Activated CD4-positive, alpha-beta T cell treated with anti-CD3 and anti-CD28 coated beads, Interleukin-2, amount 10 ng/mL, durations not matched to agents 7 days and 5 days (primary cell): ENCODE measurements at regions of chr13 and their contacts with region 1.

Region 1: DNA sequence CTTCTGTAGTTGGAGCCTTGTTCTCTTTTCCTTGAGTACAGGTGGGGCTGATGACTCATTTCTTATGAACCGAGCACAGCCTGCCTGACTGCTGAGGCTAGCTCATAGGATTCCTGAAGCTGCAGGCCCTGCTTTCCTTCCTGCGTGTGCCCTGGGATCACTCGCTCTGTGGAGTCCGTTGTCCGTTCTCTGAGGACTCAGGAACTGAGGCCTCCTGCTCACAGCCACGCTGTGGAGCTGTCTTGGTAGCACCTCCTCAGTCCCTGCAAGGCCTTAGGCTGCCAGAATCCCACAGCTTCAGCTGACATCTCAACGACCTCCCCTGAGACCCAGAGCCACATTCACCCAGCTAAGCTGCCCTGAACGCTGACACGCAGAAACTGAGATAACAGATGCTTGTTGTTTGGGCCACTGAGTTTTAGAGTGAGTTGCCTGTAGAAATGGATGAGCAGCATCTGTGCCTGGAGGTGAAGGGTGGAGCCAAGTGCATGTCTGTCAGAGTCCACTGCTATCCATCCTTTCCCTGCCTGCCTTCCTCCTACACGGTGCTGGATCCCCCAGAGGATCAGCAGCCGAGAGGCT is 72.9 kb downstream of the ARHGEF7 start:
- DNase-seq: no peak
- H3K4me3 Mint-ChIP-seq: peak overlapping the region; percentile 61
- H3K27ac Mint-ChIP-seq: peak overlapping the region; percentile 88
- H3K4me1 Mint-ChIP-seq: peaks cover 87% of the 10 kb centered on the region
- H3K27me3 Mint-ChIP-seq: no peaks in the 10 kb centered on the region

Region 2: DNA sequence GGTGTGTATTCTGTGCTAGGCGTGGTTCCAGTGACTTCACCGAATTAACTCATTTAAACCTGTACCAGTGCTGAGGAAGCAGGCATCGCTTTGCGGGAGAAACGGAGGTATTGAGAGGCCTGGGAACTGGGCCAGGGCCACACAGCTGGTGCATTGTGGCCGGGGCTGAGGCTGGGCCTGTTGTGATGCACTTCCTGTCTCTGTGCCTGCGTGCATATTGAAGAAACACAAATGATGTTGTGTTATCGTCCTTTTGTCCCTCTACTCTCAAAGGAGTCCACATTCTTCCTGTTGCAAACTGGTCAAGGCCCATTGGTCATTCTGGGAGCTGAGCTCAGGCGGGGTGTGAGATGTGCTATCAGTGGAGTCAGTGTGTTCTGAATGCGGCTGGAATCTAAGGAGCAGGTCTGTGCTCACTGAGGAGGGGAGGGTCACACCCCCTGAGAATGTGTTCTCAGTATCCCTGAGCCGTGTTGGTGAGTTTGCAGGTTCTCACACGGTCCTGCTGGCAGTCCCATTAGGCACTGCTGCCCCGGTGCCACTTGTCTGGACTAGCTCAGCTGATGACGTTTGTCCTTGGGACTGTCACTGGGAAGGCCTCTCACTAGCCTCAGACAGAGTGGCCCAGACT is 10.9 kb before region 1 on chr13:
- CTCF ChIA-PET with region 1: interaction called, 12 read pairs
- POLR2A ChIA-PET with region 1: no interaction called
- DNase-seq: peak; percentile 60
- H3K4me3 Mint-ChIP-seq: peak overlapping the region; percentile 20
- H3K27ac Mint-ChIP-seq: peak overlapping the region; percentile 89
- H3K4me1 Mint-ChIP-seq: peaks cover 74% of the 10 kb centered on the region
- H3K27me3 Mint-ChIP-seq: no peaks in the 10 kb centered on the region

Region 3: DNA sequence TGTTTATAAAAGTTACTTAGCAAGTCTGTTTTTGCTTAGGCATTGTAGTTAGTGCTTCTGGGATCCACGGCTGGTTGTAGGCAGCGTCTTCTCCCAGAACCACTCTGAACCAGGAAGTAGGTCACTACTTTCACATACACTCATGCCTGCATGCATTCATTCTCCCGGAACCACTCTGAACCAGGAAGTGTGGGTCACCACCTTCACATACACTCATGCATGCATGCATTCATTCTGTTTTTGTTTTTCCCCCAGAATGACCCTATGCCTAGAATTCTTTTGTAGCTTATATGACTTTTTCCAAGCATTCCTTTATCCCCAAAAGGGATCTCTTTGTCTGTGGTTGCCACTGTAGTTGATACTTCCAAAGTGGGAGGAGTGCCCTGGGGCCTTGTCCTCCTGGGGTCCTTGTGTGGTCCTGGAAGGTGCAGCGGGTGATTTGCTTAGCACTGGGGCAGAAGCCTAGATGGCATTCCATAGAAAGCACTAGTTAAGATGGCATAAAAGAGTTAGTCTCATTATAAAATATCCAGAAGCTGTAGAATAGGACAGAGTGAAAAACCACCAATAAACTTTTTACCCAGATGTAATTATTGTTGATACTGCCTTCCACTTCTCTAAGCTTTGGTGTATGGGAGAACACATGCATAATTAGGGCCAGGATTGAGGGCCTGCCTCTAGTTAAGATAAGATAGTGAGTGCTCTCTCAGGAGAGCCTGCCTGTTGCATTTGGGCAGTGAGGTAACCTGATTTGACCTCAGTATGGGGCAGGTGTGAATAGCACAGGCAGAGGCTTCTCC is 63.8 kb after region 1 on chr13:
- CTCF ChIA-PET with region 1: no interaction called
- POLR2A ChIA-PET with region 1: no interaction called
- DNase-seq: no peak
- H3K4me3 Mint-ChIP-seq: no peak overlapping the region
- H3K27ac Mint-ChIP-seq: no peak overlapping the region
- H3K4me1 Mint-ChIP-seq: peaks cover 2% of the 10 kb centered on the region
- H3K27me3 Mint-ChIP-seq: no peaks in the 10 kb centered on the region

Region 4: DNA sequence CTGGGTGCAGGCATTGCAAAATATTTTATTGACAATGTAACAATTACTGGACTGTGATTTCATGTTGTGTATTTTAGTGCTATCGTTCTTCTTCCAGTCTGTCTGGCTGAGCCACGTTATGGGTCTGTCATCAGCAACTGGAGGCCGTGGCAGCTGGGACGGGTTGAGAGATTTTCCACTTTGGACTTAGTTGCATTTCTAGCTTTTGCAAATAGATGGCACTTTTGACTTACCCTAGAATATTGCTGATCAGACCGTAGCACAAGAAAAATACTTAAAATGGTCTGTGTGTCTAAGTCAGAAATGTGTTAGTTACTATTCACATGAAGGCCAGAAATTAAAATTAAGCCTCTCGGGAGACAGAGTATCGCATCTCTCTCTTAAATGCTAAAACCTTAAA is 343.5 kb after region 1 on chr13:
- CTCF ChIA-PET with region 1: no interaction called
- POLR2A ChIA-PET with region 1: no interaction called
- DNase-seq: no peak
- H3K4me3 Mint-ChIP-seq: no peak overlapping the region
- H3K27ac Mint-ChIP-seq: no peak overlapping the region
- H3K4me1 Mint-ChIP-seq: no peaks in the 10 kb centered on the region
- H3K27me3 Mint-ChIP-seq: peaks cover 49% of the 10 kb centered on the region